WTC11 (cell line): ENCODE measurements at regions of chrX and their contacts with region 1.

Region 1: DNA sequence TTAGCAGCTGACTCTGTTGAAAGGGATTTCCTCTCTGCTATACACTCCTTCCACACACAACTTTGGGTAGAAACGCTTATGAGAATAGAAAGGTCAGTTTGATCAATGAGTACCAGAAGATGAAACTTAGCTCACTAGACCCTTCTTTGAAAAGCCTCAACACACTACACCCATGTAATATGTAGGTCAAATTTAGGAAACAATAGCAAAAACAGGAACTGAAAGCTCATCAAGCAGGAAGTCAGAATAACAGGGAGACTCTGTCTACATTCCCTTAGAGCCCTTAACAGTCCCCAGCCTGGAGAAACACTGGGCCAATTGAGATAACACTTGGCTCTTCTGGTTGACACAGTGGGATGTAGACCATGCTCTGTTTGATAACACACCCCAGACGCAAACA is 30.7 kb downstream of the SRPX2 start:
- DNase-seq: no peak
- ATAC-seq: no peak
- H3K4me3 Mint-ChIP-seq: no peak overlapping the region
- H3K27ac Mint-ChIP-seq: no peak overlapping the region
- H3K4me1 Mint-ChIP-seq: peaks cover 11% of the 10 kb centered on the region; the same call in 1 of the 2 replicates
- H3K27me3 Mint-ChIP-seq: no peaks in the 10 kb centered on the region
- CTCF ChIP-seq: no peak

Region 2: GRCh38 chrX:100368167-100368566 is 306.5 kb before region 1 on chrX:
- CTCF ChIA-PET with region 1: interaction called, 14 read pairs
- POLR2A ChIA-PET with region 1: no interaction called
- DNase-seq: peak; percentile 29
- ATAC-seq: peak; percentile 90
- H3K4me3 Mint-ChIP-seq: no peak overlapping the region
- H3K27ac Mint-ChIP-seq: no peak overlapping the region
- H3K4me1 Mint-ChIP-seq: peaks cover 4% of the 10 kb centered on the region
- H3K27me3 Mint-ChIP-seq: no peaks in the 10 kb centered on the region
- CTCF ChIP-seq: peak; percentile 33; the same call in 1 of the 2 replicates

Region 3: GRCh38 chrX:100587885-100588284 is 86.8 kb before region 1 on chrX:
- CTCF ChIA-PET with region 1: no interaction called
- POLR2A ChIA-PET with region 1: no interaction called
- DNase-seq: no peak
- ATAC-seq: no peak
- H3K4me3 Mint-ChIP-seq: no peak overlapping the region
- H3K27ac Mint-ChIP-seq: no peak overlapping the region
- H3K4me1 Mint-ChIP-seq: peaks cover 10% of the 10 kb centered on the region
- H3K27me3 Mint-ChIP-seq: no peaks in the 10 kb centered on the region
- CTCF ChIP-seq: no peak

Region 4: DNA sequence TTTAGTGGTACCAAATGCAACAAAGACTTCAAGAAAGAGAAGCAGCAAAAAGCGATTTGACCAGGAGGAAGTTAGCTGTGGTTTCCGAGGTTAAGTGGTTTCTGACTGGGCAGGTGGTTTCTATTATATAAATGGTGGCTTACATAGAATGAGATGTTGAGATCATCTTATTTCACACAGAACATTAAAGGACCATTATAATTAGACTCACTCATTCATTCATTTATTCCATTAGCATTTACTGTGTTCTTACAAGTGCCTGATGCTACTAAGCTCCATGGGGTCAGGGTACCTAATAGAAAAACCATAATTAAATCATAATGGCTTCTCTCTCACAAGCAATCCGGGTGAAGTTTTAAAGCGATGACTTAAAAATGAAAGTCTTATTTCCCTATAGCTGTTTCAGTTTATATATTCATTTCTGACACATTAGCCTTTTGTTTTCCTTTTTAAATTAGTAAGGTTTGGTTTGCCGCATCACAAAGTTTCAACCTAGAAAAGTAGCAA is 48.7 kb before region 1 on chrX:
- CTCF ChIA-PET with region 1: no interaction called
- POLR2A ChIA-PET with region 1: no interaction called
- DNase-seq: no peak
- ATAC-seq: no peak
- H3K4me3 Mint-ChIP-seq: no peak overlapping the region
- H3K27ac Mint-ChIP-seq: no peak overlapping the region
- H3K4me1 Mint-ChIP-seq: no peaks in the 10 kb centered on the region
- H3K27me3 Mint-ChIP-seq: no peaks in the 10 kb centered on the region
- CTCF ChIP-seq: no peak

Region 5: GRCh38 chrX:100636321-100636991 is 38.2 kb before region 1 on chrX and contains the start of gene TSPAN6:
- CTCF ChIA-PET with region 1: interaction called, 14 read pairs
- POLR2A ChIA-PET with region 1: no interaction called
- DNase-seq: peak; percentile 78
- ATAC-seq: peak; percentile 98
- H3K4me3 Mint-ChIP-seq: peak within 1 kb of the TSS; percentile 97
- H3K27ac Mint-ChIP-seq: peak within 1 kb of the TSS; percentile 99
- H3K4me1 Mint-ChIP-seq: peaks cover 23% of the 10 kb centered on the region
- H3K27me3 Mint-ChIP-seq: no peaks in the 10 kb centered on the region
- CTCF ChIP-seq: no peak; the same call in 1 of the 2 replicates
- total RNA-seq, gene TSPAN6: 47.0 to 50.5 TPM (median 49.8 TPM) in 3 replicates

Region 6: GRCh38 chrX:100649550-100650356 is 25.0 kb before region 1 on chrX:
- CTCF ChIA-PET with region 1: interaction called, 12 read pairs
- POLR2A ChIA-PET with region 1: no interaction called
- DNase-seq: peak; percentile 11
- ATAC-seq: peak; percentile 82
- H3K4me3 Mint-ChIP-seq: no peak overlapping the region
- H3K27ac Mint-ChIP-seq: no peak overlapping the region
- H3K4me1 Mint-ChIP-seq: peaks cover 43% of the 10 kb centered on the region
- H3K27me3 Mint-ChIP-seq: no peaks in the 10 kb centered on the region; the same call in 1 of the 2 replicates
- CTCF ChIP-seq: no peak

Region 7: DNA sequence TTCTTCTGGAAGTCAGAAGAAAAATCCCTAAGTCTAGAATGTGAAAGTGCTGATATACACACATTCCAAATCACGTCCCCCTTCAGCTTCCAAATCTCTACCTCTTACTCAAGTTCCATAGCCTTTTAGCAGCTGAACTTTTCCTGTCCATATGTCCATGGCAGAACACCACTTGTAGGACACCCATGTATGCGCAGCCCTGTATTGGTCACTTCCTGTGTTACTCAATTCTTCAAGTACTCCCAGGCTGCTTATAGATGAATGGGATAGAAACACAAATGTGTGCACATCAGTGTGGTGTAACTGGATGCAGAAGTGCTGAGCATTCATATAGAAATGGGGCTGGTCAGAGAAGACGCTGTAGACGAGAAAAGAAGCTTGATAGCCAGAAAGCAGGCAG is 11.9 kb before region 1 on chrX:
- CTCF ChIA-PET with region 1: interaction called, 14 read pairs
- POLR2A ChIA-PET with region 1: no interaction called
- DNase-seq: no peak
- ATAC-seq: no peak
- H3K4me3 Mint-ChIP-seq: no peak overlapping the region
- H3K27ac Mint-ChIP-seq: no peak overlapping the region
- H3K4me1 Mint-ChIP-seq: peaks cover 4% of the 10 kb centered on the region; the same call in 1 of the 2 replicates
- H3K27me3 Mint-ChIP-seq: no peaks in the 10 kb centered on the region
- CTCF ChIP-seq: no peak

Region 8: GRCh38 chrX:100685284-100685996 is 10.7 kb after region 1 on chrX:
- CTCF ChIA-PET with region 1: interaction called, 28 read pairs
- POLR2A ChIA-PET with region 1: no interaction called
- DNase-seq: peak; percentile 67
- ATAC-seq: peak; percentile 76
- H3K4me3 Mint-ChIP-seq: no peak overlapping the region
- H3K27ac Mint-ChIP-seq: no peak overlapping the region
- H3K4me1 Mint-ChIP-seq: no peaks in the 10 kb centered on the region
- H3K27me3 Mint-ChIP-seq: no peaks in the 10 kb centered on the region; the same call in 1 of the 2 replicates
- CTCF ChIP-seq: peak; percentile 51

Region 9: DNA sequence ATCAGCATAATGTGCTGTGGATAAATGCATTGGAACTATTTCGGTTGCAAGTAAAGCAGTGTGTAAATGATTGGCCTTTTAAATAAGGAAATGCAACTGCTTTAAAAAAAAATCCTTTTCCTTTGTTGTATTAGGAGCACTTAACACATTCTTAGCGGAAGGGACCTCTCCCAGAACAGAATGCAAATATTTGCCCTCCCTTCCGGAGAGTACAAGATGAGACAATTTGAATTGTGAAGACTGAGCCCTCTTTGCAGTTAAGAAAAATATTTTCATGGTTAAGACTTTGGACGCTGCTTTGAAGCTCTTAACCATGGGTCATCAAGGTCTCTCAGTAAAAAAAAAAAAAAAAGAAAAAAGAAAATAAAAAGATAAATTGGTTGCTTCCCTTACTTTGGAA is 208.9 kb after region 1 on chrX:
- CTCF ChIA-PET with region 1: no interaction called
- POLR2A ChIA-PET with region 1: no interaction called
- DNase-seq: no peak
- ATAC-seq: no peak
- H3K4me3 Mint-ChIP-seq: no peak overlapping the region
- H3K27ac Mint-ChIP-seq: no peak overlapping the region
- H3K4me1 Mint-ChIP-seq: peaks cover 4% of the 10 kb centered on the region
- H3K27me3 Mint-ChIP-seq: no peaks in the 10 kb centered on the region
- CTCF ChIP-seq: no peak